Posterior vena cava (tissue), 2 donors: ENCODE measurements at regions of chr11 and their contacts with region 1.

Region 1: GRCh38 chr11:9613118-9613829 is 39.8 kb downstream of the WEE1 start:
- DNase-seq: peak; percentile 98

Region 2: GRCh38 chr11:9573052-9573774 is 40.1 kb before region 1 on chr11 and contains the start of gene WEE1:
- intact Hi-C with region 1: loop called in 1 of 2 experiments (anchors 5 kb)
- DNase-seq: peak; percentile 99
- total RNA-seq, gene WEE1: 16.7 to 24.0 TPM

Region 3: GRCh38 chr11:9663699-9664275 is 50.5 kb after region 1 on chr11 and contains the start of gene SWAP70:
- intact Hi-C with region 1: loop called in 1 of 2 experiments (anchors 5 kb)
- DNase-seq: peak; percentile 97
- total RNA-seq, gene SWAP70: 39.4 to 57.0 TPM

Region 4: GRCh38 chr11:10197091-10197490 is 583.8 kb after region 1 on chr11:
- intact Hi-C with region 1: no loop called
- DNase-seq: no peak